CD4-positive, alpha-beta memory T cell (primary cell): ENCODE measurements at regions of chr15 and their contacts with region 1.

Region 1: GRCh38 chr15:45611305-45611704 is 23.5 kb upstream of the SQOR start:
- DNase-seq: no peak
- H3K4me3 ChIP-seq: no peak overlapping the region
- H3K4me3 Mint-ChIP-seq: no peak overlapping the region
- H3K27ac ChIP-seq: no peak overlapping the region
- H3K27ac Mint-ChIP-seq: no peak overlapping the region
- H3K4me1 ChIP-seq: no peaks in the 10 kb centered on the region
- H3K4me1 Mint-ChIP-seq: no peaks in the 10 kb centered on the region
- H3K27me3 ChIP-seq: no peaks in the 10 kb centered on the region
- H3K27me3 Mint-ChIP-seq: no peaks in the 10 kb centered on the region

Region 2: DNA sequence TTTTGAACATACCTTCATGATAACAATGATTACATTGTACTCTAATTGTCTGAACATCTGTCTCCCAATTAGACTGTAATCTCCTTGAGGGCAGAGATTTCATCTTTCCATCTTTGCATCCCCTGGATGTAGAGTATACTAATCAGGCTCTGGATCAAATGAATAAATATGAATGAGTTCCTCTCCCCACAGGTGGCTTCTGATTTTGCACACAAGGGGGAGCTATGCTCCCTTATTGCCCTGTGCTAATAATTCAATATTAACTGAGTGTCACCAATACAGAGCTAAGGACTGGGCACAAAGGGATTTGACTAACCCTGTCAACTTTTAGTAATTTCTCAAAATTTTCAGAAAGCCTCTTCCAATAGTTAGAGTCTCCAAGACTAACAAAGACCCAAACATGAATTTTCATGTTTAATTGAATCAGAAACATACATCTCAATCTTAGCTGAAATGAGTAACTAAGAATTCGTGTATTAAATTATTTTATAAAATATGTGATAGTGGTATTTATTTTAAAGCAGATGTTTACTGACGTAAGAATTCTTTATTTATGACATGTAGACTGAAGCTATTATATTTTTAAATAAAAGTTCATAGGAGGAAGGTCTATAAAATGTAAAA is 484.7 kb before region 1 on chr15:
- CTCF ChIA-PET with region 1: no interaction called
- POLR2A ChIA-PET with region 1: no interaction called
- intact Hi-C with region 1: loop called (anchors 5 kb)
- DNase-seq: peak in 4 of 5 donors; percentile 45 to 52 (median 48)
- H3K4me3 ChIP-seq: no peak overlapping the region
- H3K4me3 Mint-ChIP-seq: no peak overlapping the region
- H3K27ac ChIP-seq: no peak overlapping the region
- H3K27ac Mint-ChIP-seq: no peak overlapping the region
- H3K4me1 ChIP-seq: no peaks in the 10 kb centered on the region
- H3K4me1 Mint-ChIP-seq: peaks cover 0 to 8% (median 4%) of the 10 kb centered on the region in 4 donors
- H3K27me3 ChIP-seq: peaks cover 25% of the 10 kb centered on the region
- H3K27me3 Mint-ChIP-seq: peaks cover 34 to 51% of the 10 kb centered on the region in 2 donors

Region 3: DNA sequence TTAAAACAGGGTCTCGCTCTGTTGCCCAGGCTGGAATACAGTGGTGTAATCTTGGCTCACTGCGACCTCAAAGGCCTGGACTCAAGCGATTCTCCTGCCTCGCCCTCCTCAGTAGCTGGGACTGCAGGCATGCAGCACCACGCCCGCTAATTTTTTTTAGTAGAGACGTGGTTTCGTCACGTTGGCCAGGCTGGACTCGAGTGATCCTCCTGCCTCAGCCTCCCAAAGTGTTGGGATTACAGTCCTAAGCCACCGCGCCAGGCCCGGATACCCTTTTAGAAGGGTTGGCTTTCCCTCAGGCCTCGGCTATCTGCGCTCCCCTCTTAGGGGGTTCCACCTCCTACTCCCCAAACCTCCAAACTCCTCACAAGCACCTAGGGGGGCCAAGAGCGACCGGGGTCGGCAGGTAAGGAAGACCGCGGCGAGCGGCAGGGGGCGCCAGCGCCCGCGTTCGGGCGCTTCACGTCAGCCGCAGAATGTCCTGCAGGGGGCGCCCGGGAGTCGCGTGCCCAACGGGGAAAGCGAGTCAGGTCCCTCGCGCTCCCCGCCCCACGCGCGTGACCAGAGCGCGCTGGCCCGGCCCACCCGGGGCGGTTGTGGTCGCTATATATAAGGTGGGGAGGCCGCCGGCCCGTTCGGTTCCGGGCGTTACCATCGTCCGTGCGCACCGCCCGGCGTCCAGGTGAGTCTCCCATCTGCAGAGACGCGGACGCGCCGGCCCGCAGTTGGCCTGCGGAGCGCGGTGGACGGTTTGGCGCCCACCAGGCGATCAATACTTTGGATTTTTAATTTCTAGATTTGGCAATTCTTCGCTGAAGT is 181.1 kb before region 1 on chr15:
- CTCF ChIA-PET with region 1: interaction called, 29 read pairs
- POLR2A ChIA-PET with region 1: no interaction called
- intact Hi-C with region 1: loop called (anchors 1 kb)
- DNase-seq: peak; percentile 78 to 84 (median 80)
- H3K4me3 ChIP-seq: peak overlapping the region; percentile 44 to 56
- H3K4me3 Mint-ChIP-seq: peak overlapping the region in 7 of 8 donors; percentile 9 to 70 (median 44)
- H3K27ac ChIP-seq: no peak overlapping the region
- H3K27ac Mint-ChIP-seq: no peak overlapping the region
- H3K4me1 ChIP-seq: peaks cover 12% of the 10 kb centered on the region
- H3K4me1 Mint-ChIP-seq: no peaks in the 10 kb centered on the region
- H3K27me3 ChIP-seq: no peaks in the 10 kb centered on the region
- H3K27me3 Mint-ChIP-seq: peaks cover 0 to 4% of the 10 kb centered on the region in 2 donors

Region 4: GRCh38 chr15:45522328-45523160 is 88.8 kb before region 1 on chr15 and contains the start of gene SLC30A4:
- CTCF ChIA-PET with region 1: no interaction called
- POLR2A ChIA-PET with region 1: no interaction called
- intact Hi-C with region 1: loop called (anchors 1 kb)
- DNase-seq: peak; percentile 68 to 75 (median 69)
- H3K4me3 ChIP-seq: peak within 1 kb of the TSS; percentile 62 to 82
- H3K4me3 Mint-ChIP-seq: peak within 1 kb of the TSS; percentile 87 to 96 (median 94)
- H3K27ac ChIP-seq: peak within 1 kb of the TSS; percentile 54
- H3K27ac Mint-ChIP-seq: peak within 1 kb of the TSS; percentile 36 to 93 (median 88)
- H3K4me1 ChIP-seq: peaks cover 15% of the 10 kb centered on the region
- H3K4me1 Mint-ChIP-seq: peaks cover 18 to 28% (median 21%) of the 10 kb centered on the region in 4 donors
- H3K27me3 ChIP-seq: no peaks in the 10 kb centered on the region
- H3K27me3 Mint-ChIP-seq: no peaks in the 10 kb centered on the region
- total RNA-seq, gene SLC30A4: 3.6 to 3.8 TPM

Region 5: GRCh38 chr15:45549541-45550220 is 61.6 kb before region 1 on chr15:
- CTCF ChIA-PET with region 1: no interaction called
- POLR2A ChIA-PET with region 1: no interaction called
- intact Hi-C with region 1: no loop called
- DNase-seq: no peak
- H3K4me3 ChIP-seq: no peak overlapping the region
- H3K4me3 Mint-ChIP-seq: no peak overlapping the region
- H3K27ac ChIP-seq: no peak overlapping the region
- H3K27ac Mint-ChIP-seq: no peak overlapping the region
- H3K4me1 ChIP-seq: no peaks in the 10 kb centered on the region
- H3K4me1 Mint-ChIP-seq: no peaks in the 10 kb centered on the region
- H3K27me3 ChIP-seq: no peaks in the 10 kb centered on the region
- H3K27me3 Mint-ChIP-seq: peaks cover 5 to 9% of the 10 kb centered on the region in 2 donors

Region 6: DNA sequence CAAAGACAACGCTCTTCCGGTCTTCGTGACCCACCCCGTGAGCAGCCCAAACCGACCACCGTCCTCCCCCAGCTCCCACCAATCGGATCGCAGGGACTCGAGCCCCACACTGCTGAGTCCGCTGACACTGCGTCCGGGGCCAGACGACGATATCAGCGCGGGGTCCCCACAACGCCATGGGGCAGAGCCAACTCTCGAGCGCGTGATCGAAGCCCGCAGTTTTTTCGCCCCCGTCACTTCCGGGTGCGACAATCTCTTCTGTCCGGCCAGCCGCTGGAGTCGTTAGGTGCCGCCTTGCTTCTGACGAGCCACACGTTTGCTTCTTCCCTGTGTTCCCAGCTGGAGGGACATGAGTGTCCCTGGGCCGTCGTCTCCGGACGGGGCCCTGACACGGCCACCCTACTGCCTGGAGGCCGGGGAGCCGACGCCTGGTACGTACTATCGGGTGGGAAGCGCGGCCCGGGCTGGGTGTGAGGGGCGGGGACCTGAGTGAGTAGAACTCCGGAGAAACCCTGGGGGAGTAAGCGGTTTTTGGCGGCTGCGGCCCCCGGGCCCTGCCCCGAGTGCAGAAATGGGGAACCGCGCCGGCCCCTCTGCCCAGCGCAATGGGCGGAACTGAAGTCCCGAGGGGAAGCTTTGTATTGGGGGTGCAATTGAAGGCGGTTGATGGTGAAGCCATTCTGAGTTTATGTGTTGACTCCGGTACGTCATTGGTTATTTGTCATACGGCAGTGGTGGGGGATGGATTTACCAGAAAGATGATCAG is 24.0 kb before region 1 on chr15 and contains the start of gene BLOC1S6:
- CTCF ChIA-PET with region 1: interaction called, 32 read pairs
- POLR2A ChIA-PET with region 1: interaction called, 5 read pairs
- intact Hi-C with region 1: no loop called
- DNase-seq: peak; percentile 87 to 91 (median 90)
- H3K4me3 ChIP-seq: peak within 1 kb of the TSS; percentile 89 to 99
- H3K4me3 Mint-ChIP-seq: peak within 1 kb of the TSS; percentile 96 to 100 (median 100)
- H3K27ac ChIP-seq: peak within 1 kb of the TSS; percentile 95
- H3K27ac Mint-ChIP-seq: peak within 1 kb of the TSS; percentile 100
- H3K4me1 ChIP-seq: peaks cover 44% of the 10 kb centered on the region
- H3K4me1 Mint-ChIP-seq: peaks cover 20 to 48% (median 37%) of the 10 kb centered on the region in 4 donors
- H3K27me3 ChIP-seq: no peaks in the 10 kb centered on the region
- H3K27me3 Mint-ChIP-seq: no peaks in the 10 kb centered on the region
- total RNA-seq, gene BLOC1S6: 43.0 to 43.9 TPM

Region 7: GRCh38 chr15:45634442-45635190 is 23.3 kb after region 1 on chr15 and contains the start of gene SQOR:
- CTCF ChIA-PET with region 1: interaction called, 10 read pairs
- POLR2A ChIA-PET with region 1: no interaction called
- intact Hi-C with region 1: loop called (anchors 1 kb)
- DNase-seq: peak; percentile 63 to 71 (median 67)
- H3K4me3 ChIP-seq: peak within 1 kb of the TSS; percentile 76 to 90
- H3K4me3 Mint-ChIP-seq: peak within 1 kb of the TSS; percentile 88 to 99 (median 98)
- H3K27ac ChIP-seq: peak within 1 kb of the TSS; percentile 67
- H3K27ac Mint-ChIP-seq: peak within 1 kb of the TSS; percentile 90 to 96 (median 95)
- H3K4me1 ChIP-seq: peaks cover 45% of the 10 kb centered on the region
- H3K4me1 Mint-ChIP-seq: peaks cover 26 to 53% (median 41%) of the 10 kb centered on the region in 4 donors
- H3K27me3 ChIP-seq: no peaks in the 10 kb centered on the region
- H3K27me3 Mint-ChIP-seq: no peaks in the 10 kb centered on the region
- total RNA-seq, gene SQOR: 47.9 to 51.0 TPM

Region 8: DNA sequence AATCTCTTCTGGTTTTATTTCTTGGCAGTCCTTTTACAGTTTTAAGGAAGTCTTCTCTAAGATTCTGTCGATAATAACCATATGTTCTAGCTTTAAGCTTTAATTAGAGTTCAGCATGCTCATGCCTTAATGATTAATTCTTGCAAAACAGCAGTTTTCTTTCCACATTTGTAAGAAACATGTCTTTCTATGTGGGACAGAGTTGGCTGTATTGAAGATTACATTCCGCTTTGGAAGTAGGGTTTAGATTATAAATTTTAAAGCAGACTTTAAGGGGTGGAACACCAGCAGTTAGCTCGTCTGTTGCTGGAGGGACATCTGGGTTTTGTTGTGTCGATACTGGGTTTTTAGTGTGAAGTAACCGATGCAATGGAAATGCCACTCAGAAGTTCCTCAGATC is 58.8 kb after region 1 on chr15:
- CTCF ChIA-PET with region 1: no interaction called
- POLR2A ChIA-PET with region 1: no interaction called
- intact Hi-C with region 1: no loop called
- DNase-seq: no peak
- H3K4me3 ChIP-seq: no peak overlapping the region
- H3K4me3 Mint-ChIP-seq: no peak overlapping the region
- H3K27ac ChIP-seq: no peak overlapping the region
- H3K27ac Mint-ChIP-seq: no peak overlapping the region
- H3K4me1 ChIP-seq: no peaks in the 10 kb centered on the region
- H3K4me1 Mint-ChIP-seq: peaks cover 10 to 22% (median 12%) of the 10 kb centered on the region in 4 donors
- H3K27me3 ChIP-seq: no peaks in the 10 kb centered on the region
- H3K27me3 Mint-ChIP-seq: no peaks in the 10 kb centered on the region

Region 9: GRCh38 chr15:45795440-45796069 is 184.2 kb after region 1 on chr15:
- CTCF ChIA-PET with region 1: no interaction called
- POLR2A ChIA-PET with region 1: no interaction called
- intact Hi-C with region 1: no loop called
- DNase-seq: no peak
- H3K4me3 ChIP-seq: no peak overlapping the region
- H3K4me3 Mint-ChIP-seq: no peak overlapping the region
- H3K27ac ChIP-seq: no peak overlapping the region
- H3K27ac Mint-ChIP-seq: no peak overlapping the region
- H3K4me1 ChIP-seq: no peaks in the 10 kb centered on the region
- H3K4me1 Mint-ChIP-seq: peaks cover 0 to 2% (median 0%) of the 10 kb centered on the region in 4 donors
- H3K27me3 ChIP-seq: no peaks in the 10 kb centered on the region
- H3K27me3 Mint-ChIP-seq: peaks cover 6 to 8% of the 10 kb centered on the region in 2 donors